GM12878 (cell line): ENCODE measurements at regions of chr15 and their contacts with region 1.

Region 1: GRCh38 chr15:97084650-97085049 is 754.1 kb downstream of the NR2F2 start:
- DNase-seq: no peak
- ATAC-seq: no peak
- H3K4me3 ChIP-seq: no peak overlapping the region
- H3K27ac ChIP-seq: no peak overlapping the region
- H3K4me1 ChIP-seq: no peaks in the 10 kb centered on the region
- H3K27me3 ChIP-seq: no peaks in the 10 kb centered on the region
- CTCF ChIP-seq: no peak
- EP300 ChIP-seq: no peak
- POLR2A ChIP-seq: no peak
- RAD21 ChIP-seq: no peak

Region 2: GRCh38 chr15:96992817-96993216 is 91.8 kb before region 1 on chr15:
- CTCF ChIA-PET with region 1: no interaction called
- POLR2A ChIA-PET with region 1: no interaction called
- RAD21 ChIA-PET with region 1: no interaction called
- SMC1A ChIA-PET with region 1: no interaction called
- in situ Hi-C with region 1: no loop called
- intact Hi-C with region 1: no loop called
- DNase-seq: no peak
- ATAC-seq: peak; percentile 69
- H3K4me3 ChIP-seq: no peak overlapping the region
- H3K27ac ChIP-seq: no peak overlapping the region
- H3K4me1 ChIP-seq: no peaks in the 10 kb centered on the region
- H3K27me3 ChIP-seq: no peaks in the 10 kb centered on the region
- CTCF ChIP-seq: no peak
- EP300 ChIP-seq: no peak
- POLR2A ChIP-seq: no peak
- RAD21 ChIP-seq: no peak

Region 3: GRCh38 chr15:97072545-97072944 is 12.1 kb before region 1 on chr15:
- CTCF ChIA-PET with region 1: interaction called, 4 read pairs
- POLR2A ChIA-PET with region 1: interaction called, 3 read pairs
- RAD21 ChIA-PET with region 1: interaction called, 17 read pairs
- SMC1A ChIA-PET with region 1: interaction called, 14 read pairs
- in situ Hi-C with region 1: no loop called
- intact Hi-C with region 1: no loop called
- DNase-seq: no peak
- ATAC-seq: peak; percentile 91
- H3K4me3 ChIP-seq: no peak overlapping the region
- H3K27ac ChIP-seq: no peak overlapping the region
- H3K4me1 ChIP-seq: no peaks in the 10 kb centered on the region
- H3K27me3 ChIP-seq: no peaks in the 10 kb centered on the region
- CTCF ChIP-seq: no peak
- EP300 ChIP-seq: no peak
- POLR2A ChIP-seq: no peak
- RAD21 ChIP-seq: no peak

Region 4: DNA sequence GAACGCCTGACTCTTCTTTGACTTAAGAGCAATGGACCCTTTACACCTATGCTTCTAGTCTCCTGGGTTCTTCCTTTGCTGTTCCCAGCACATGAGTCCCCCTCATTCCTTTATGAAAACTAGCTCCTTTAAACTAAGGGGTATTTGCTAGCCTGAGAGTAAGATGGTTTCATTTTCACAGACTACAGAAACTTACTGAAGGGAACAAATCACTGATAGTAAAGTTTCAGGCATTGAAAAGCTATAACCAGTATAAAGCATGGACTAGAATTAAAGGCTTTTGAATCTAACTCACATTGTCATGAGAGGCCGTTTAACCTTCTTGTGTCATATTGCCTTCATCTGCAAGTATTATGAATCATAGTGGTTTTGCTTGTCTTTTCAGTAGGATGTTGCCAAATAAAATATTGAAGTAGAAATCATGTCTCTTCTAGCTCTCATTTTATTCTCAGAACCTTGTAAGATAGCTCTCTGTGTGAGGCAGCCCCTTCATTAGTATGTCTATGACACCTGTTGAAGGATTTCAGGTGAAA is 11.7 kb after region 1 on chr15:
- CTCF ChIA-PET with region 1: interaction called, 4 read pairs
- POLR2A ChIA-PET with region 1: interaction called, 5 read pairs
- RAD21 ChIA-PET with region 1: interaction called, 14 read pairs
- SMC1A ChIA-PET with region 1: interaction called, 24 read pairs
- in situ Hi-C with region 1: no loop called
- intact Hi-C with region 1: no loop called
- DNase-seq: no peak
- ATAC-seq: peak; percentile 54
- H3K4me3 ChIP-seq: no peak overlapping the region
- H3K27ac ChIP-seq: no peak overlapping the region
- H3K4me1 ChIP-seq: no peaks in the 10 kb centered on the region
- H3K27me3 ChIP-seq: no peaks in the 10 kb centered on the region
- CTCF ChIP-seq: no peak
- EP300 ChIP-seq: no peak
- POLR2A ChIP-seq: no peak
- RAD21 ChIP-seq: no peak

Region 5: DNA sequence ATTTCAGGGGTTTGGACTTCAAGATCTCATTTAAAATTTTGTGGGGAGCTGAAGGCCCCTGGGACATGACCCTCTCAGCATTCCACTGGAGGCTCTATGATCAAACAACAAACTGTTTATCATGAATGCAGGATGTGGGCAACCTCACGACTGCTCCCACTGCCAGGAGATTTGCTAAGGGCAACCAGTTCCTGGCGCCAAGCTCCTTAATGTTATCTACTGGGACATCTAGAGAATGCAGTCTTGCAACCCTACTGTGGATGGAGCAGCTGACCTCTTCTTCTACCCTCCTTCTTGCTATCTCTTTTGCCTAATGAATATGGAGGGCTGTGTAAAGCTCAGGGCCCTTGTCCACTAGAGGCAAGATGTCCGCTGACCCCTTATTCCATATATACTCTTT is 20.8 kb after region 1 on chr15:
- CTCF ChIA-PET with region 1: interaction called, 3 read pairs
- POLR2A ChIA-PET with region 1: no interaction called
- RAD21 ChIA-PET with region 1: interaction called, 3 read pairs
- SMC1A ChIA-PET with region 1: interaction called, 11 read pairs
- in situ Hi-C with region 1: no loop called
- intact Hi-C with region 1: no loop called
- DNase-seq: no peak
- ATAC-seq: no peak
- H3K4me3 ChIP-seq: no peak overlapping the region
- H3K27ac ChIP-seq: no peak overlapping the region
- H3K4me1 ChIP-seq: no peaks in the 10 kb centered on the region
- H3K27me3 ChIP-seq: no peaks in the 10 kb centered on the region
- CTCF ChIP-seq: no peak
- EP300 ChIP-seq: no peak
- POLR2A ChIP-seq: no peak
- RAD21 ChIP-seq: no peak